ENCODE measurements at regions of chr7 and their contacts with region 1.

Region 1: DNA sequence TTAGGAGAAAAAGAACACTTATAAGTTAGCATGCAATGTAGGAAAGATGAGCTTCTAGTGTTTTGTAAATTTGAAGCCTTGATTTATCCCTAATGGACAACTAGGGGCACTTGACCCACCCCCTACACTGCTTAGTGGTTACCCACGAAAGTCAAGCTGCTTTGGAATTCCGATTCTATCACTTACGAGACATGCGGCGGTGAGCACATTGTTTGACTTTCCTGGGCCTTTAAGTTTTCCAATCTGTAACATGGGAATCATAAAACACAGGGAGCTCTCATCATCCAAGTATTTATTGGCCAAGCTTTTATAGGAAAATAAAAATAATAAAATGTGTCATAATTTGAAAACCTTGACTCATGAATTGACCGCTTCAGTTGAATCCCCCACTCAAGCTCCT is 78.7 kb upstream of the PDK4 start:
- DNase-seq: no peak
- H3K4me3 ChIP-seq: no peak overlapping the region
- H3K27ac ChIP-seq: no peak overlapping the region
- H3K4me1 ChIP-seq: no peaks in the 10 kb centered on the region
- H3K27me3 ChIP-seq: no peaks in the 10 kb centered on the region
- CTCF ChIP-seq: no peak
- POLR2A ChIP-seq: no peak

Region 2: GRCh38 chr7:95534796-95535195 is 140.2 kb before region 1 on chr7:
- intact Hi-C with region 1: loop called (anchors 5 kb)
- DNase-seq: no peak
- H3K4me3 ChIP-seq: no peak overlapping the region
- H3K27ac ChIP-seq: no peak overlapping the region
- H3K4me1 ChIP-seq: no peaks in the 10 kb centered on the region
- H3K27me3 ChIP-seq: no peaks in the 10 kb centered on the region
- CTCF ChIP-seq: no peak
- POLR2A ChIP-seq: no peak

Region 3: GRCh38 chr7:95690367-95690947 is 15.4 kb after region 1 on chr7:
- intact Hi-C with region 1: no loop called
- DNase-seq: no peak
- H3K4me3 ChIP-seq: peak overlapping the region in 1 of 3 donors; percentile 30
- H3K27ac ChIP-seq: no peak overlapping the region
- H3K4me1 ChIP-seq: no peaks in the 10 kb centered on the region
- H3K27me3 ChIP-seq: no peaks in the 10 kb centered on the region
- CTCF ChIP-seq: peak; percentile 27 to 84 (median 72)
- POLR2A ChIP-seq: no peak